ENCODE measurements at regions of chr7 and their contacts with region 1.

Region 1: GRCh38 chr7:18693406-18693805 is 197.9 kb downstream of the HDAC9 start:
- DNase-seq: peak; percentile 80
- H3K4me3 Mint-ChIP-seq: no peak overlapping the region
- H3K27ac Mint-ChIP-seq: no peak overlapping the region
- H3K4me1 Mint-ChIP-seq: peaks cover 8% of the 10 kb centered on the region
- H3K27me3 Mint-ChIP-seq: no peaks in the 10 kb centered on the region
- CTCF ChIP-seq: peak; percentile 69

Region 2: GRCh38 chr7:18607025-18607424 is 86.4 kb before region 1 on chr7:
- CTCF ChIA-PET with region 1: no interaction called
- POLR2A ChIA-PET with region 1: no interaction called
- intact Hi-C with region 1: no loop called
- DNase-seq: peak; percentile 11
- H3K4me3 Mint-ChIP-seq: no peak overlapping the region
- H3K27ac Mint-ChIP-seq: no peak overlapping the region
- H3K4me1 Mint-ChIP-seq: no peaks in the 10 kb centered on the region
- H3K27me3 Mint-ChIP-seq: no peaks in the 10 kb centered on the region
- CTCF ChIP-seq: no peak

Region 3: DNA sequence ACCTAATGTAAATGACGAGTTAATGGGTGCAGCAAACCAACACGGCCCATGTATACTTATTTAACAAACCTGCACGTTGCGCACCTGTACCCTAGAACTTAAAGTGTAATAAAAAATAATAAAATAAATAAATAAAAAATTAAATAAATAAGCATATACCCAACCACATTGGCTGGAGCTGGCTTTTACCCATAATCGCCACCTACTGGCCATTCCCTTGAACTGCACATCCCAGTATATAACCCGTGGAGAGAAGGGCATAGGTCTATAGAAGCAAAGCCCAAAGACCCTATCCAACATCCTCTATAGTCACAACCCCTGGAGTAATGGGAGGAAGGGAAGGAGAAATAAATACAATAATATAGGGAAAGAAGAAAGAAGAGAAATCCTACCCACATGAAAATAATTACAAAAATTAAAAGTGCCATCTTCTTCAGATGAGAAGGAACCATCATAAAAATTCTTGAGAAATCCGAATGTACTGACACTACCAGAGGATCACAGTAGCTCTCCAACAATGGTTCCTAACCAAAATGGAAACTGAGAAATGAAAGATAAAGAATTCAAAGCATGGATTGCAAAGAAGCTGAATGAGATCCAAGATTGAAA is 358.5 kb after region 1 on chr7:
- CTCF ChIA-PET with region 1: interaction called, 6 read pairs
- POLR2A ChIA-PET with region 1: no interaction called
- intact Hi-C with region 1: loop called (anchors 1 kb)
- DNase-seq: peak; percentile 54
- H3K4me3 Mint-ChIP-seq: no peak overlapping the region
- H3K27ac Mint-ChIP-seq: no peak overlapping the region
- H3K4me1 Mint-ChIP-seq: no peaks in the 10 kb centered on the region
- H3K27me3 Mint-ChIP-seq: no peaks in the 10 kb centered on the region
- CTCF ChIP-seq: peak; percentile 76

Region 4: GRCh38 chr7:19442016-19442785 is 748.8 kb after region 1 on chr7:
- CTCF ChIA-PET with region 1: no interaction called
- POLR2A ChIA-PET with region 1: no interaction called
- intact Hi-C with region 1: loop called (anchors 5 kb)
- DNase-seq: peak; percentile 67
- H3K4me3 Mint-ChIP-seq: no peak overlapping the region
- H3K27ac Mint-ChIP-seq: no peak overlapping the region
- H3K4me1 Mint-ChIP-seq: peaks cover 6% of the 10 kb centered on the region
- H3K27me3 Mint-ChIP-seq: no peaks in the 10 kb centered on the region
- CTCF ChIP-seq: peak; percentile 46

Region 5: DNA sequence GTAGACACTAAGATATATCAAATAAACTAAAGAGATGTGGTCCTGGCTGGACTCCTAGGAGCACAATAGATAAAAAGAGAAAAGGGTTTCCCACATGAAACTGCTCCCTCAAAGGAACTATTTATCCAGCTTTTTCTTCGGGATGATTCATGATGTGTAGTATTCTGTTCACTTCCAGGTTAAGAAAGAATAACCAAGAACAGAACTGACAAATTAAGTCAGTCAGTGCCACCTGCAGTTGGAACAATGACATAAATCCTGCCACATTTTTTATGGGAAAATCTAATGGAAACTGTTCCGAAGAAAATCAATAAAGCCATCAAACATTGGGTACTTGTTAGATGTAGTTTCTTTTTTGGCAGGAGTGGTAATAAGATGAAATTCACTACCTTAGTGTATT is 928.3 kb after region 1 on chr7:
- CTCF ChIA-PET with region 1: interaction called, 3 read pairs
- POLR2A ChIA-PET with region 1: no interaction called
- intact Hi-C with region 1: loop called (anchors 1 kb)
- DNase-seq: peak; percentile 67
- H3K4me3 Mint-ChIP-seq: no peak overlapping the region
- H3K27ac Mint-ChIP-seq: peak overlapping the region; percentile 89
- H3K4me1 Mint-ChIP-seq: peaks cover 33% of the 10 kb centered on the region
- H3K27me3 Mint-ChIP-seq: no peaks in the 10 kb centered on the region
- CTCF ChIP-seq: peak; percentile 34

Region 6: DNA sequence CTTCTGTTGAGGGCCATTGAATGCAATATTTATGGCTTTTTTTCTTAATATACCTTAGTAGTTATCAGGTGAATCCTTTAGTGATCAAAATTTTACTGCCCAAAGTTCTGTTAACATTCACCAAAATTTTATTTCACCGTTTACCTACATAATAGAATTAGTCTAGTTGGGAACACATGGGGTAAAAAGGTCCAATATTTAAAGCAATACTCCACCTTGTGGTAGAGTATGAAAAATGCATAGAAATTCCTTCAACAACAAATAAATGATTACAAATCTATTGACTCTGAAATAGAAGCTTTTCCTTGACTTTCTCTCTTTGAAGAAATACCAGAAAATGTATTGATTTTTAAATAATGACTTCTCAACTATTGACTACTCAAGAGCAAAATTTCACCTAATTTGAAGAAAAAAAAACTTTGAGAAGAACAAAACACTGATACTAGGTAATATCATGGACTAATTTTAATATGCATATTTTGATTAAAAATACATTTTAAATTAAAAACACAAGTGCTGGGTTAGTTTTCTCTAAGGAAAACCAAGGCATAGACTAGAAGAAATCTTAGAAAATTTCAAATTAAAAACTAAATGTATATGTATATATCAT is 972.1 kb after region 1 on chr7:
- CTCF ChIA-PET with region 1: interaction called, 9 read pairs
- POLR2A ChIA-PET with region 1: interaction called, 4 read pairs
- intact Hi-C with region 1: loop called (anchors 2 kb)
- DNase-seq: peak; percentile 51
- H3K4me3 Mint-ChIP-seq: no peak overlapping the region
- H3K27ac Mint-ChIP-seq: no peak overlapping the region
- H3K4me1 Mint-ChIP-seq: peaks cover 23% of the 10 kb centered on the region
- H3K27me3 Mint-ChIP-seq: no peaks in the 10 kb centered on the region
- CTCF ChIP-seq: peak; percentile 48